ENCODE measurements at regions of chr6 and their contacts with region 1.

Region 1: GRCh38 chr6:31079656-31080261 is 32.6 kb downstream of the C6orf15 start:
- DNase-seq: no peak
- H3K4me3 ChIP-seq: peak overlapping the region in 3 of 4 donors; percentile 20 to 46 (median 23)
- H3K27ac ChIP-seq: no peak overlapping the region
- H3K4me1 ChIP-seq: peaks cover 3 to 9% (median 6%) of the 10 kb centered on the region in 4 donors
- H3K27me3 ChIP-seq: peaks cover 0 to 6% (median 0%) of the 10 kb centered on the region in 4 donors
- CTCF ChIP-seq: peak; percentile 68 to 91 (median 70)
- EP300 ChIP-seq: no peak
- POLR2A ChIP-seq: no peak

Region 2: DNA sequence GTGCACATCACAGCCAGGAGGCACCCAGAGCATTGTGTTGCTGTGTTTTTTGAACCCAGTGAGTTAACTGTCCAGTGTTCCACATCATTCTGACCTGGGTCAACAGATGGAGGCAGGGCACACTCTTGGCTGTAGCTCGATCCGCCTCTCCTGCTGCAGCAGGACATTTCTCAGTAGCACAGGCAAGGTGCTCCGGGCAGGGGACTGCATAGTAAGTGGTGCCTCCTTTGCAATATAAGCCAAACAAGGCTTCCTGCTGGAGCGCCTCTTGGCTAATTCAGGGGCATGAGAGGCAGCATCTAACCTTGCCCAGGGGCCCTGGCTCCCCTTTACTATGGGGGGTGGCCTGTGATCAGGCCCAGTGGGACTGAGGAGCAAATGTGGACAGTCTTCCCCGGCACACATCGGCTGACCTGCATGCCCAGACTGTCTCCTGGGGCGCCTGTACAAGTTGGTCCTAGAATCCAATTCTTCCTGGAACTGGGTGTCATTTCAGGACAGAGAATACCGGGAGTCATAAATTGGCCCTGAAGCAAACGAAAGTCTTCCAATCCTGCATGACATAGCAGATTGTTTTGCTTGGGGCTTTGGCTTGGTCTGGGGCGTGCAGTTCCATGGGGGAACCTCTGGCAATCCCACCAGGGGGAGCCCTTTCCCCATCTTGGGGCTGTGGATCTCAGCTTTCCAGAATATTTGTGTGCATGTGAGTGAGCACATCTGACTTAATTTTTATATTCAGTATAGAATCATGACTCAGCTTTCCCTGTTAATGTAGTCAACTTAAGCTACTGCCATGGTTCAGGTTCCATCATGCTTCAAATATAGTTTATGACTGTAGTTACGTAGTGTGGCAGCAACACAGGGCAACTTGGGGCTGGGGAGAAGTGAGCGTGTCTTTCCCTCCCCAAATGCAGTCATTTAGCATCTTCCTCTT is 251.5 kb before region 1 on chr6:
- intact Hi-C with region 1: loop called (anchors 5 kb)
- DNase-seq: peak; percentile 97
- H3K4me3 ChIP-seq: peak overlapping the region in 2 of 4 donors; percentile 12 to 16
- H3K27ac ChIP-seq: peak overlapping the region; percentile 54 to 85 (median 74)
- H3K4me1 ChIP-seq: peaks cover 12 to 33% (median 25%) of the 10 kb centered on the region in 4 donors
- H3K27me3 ChIP-seq: no peaks in the 10 kb centered on the region
- CTCF ChIP-seq: peak; percentile 92 to 97 (median 95)
- EP300 ChIP-seq: peak; percentile 75
- POLR2A ChIP-seq: no peak

Region 3: DNA sequence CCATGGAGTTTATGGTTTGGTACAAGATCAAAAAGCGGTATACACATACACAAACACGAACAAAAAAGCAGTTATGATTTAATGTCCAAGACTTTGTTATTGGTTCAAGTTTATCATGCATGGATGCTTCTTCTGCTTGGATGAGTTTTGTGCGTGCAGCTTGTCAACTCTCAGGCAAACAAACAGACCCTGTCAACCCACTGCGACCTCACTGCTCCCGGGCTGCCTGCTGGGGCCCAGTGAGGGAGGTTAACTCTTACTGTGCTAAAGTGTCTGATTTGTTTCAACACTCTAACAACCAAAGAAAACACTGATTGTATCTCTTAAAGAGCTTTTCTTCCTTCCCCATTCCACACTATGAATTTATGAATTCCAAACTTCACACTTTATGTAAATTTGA is 222.2 kb before region 1 on chr6:
- intact Hi-C with region 1: no loop called
- DNase-seq: no peak
- H3K4me3 ChIP-seq: no peak overlapping the region
- H3K27ac ChIP-seq: no peak overlapping the region
- H3K4me1 ChIP-seq: no peaks in the 10 kb centered on the region
- H3K27me3 ChIP-seq: no peaks in the 10 kb centered on the region
- CTCF ChIP-seq: no peak
- EP300 ChIP-seq: no peak
- POLR2A ChIP-seq: no peak

Region 4: DNA sequence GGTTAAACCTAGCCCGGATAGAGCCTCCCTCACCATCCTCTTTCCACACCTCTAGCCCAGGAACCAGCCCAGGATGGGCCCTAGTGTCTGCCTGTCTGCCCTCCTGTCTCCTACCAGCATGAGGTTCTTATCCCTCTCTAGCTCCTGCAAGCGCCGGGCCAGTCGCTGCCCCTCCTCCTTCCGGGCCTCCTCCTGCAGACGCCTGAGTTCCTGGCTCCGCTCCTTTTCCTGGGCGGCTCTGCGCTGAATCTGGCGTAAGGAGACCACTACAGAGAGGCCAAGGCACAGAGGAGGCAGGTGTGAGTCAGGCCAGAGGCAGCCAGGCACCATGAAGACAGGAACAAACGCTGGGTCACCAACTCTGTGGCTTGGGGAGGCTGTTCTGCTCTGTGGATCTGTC is 63.4 kb after region 1 on chr6:
- intact Hi-C with region 1: no loop called
- DNase-seq: no peak
- H3K4me3 ChIP-seq: no peak overlapping the region
- H3K27ac ChIP-seq: peak overlapping the region in 2 of 4 donors; percentile 30 to 48
- H3K4me1 ChIP-seq: peaks cover 6 to 24% (median 21%) of the 10 kb centered on the region in 4 donors
- H3K27me3 ChIP-seq: peaks cover 0 to 4% (median 0%) of the 10 kb centered on the region in 4 donors
- CTCF ChIP-seq: no peak
- EP300 ChIP-seq: no peak
- POLR2A ChIP-seq: no peak

Region 5: DNA sequence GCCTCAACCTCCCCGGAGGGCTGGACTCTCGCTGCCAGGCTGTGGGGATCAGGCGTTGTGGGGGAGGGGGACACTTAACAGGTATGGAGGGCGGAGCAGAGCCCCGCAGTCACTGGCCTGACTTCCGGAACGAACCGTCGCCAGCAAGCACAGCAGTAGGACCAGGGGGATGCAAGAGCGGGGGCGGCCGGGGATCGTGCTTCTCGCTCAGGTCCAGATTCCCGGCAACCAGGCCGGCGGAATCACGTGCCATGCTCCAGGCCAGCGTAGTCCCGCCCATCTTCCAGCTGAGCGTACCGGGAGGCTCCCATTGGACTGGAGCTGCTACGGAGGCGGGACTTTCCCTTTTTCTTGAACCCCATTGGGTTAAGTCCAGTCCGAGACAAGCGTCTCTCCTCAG is 100.7 kb after region 1 on chr6:
- intact Hi-C with region 1: no loop called
- DNase-seq: no peak
- H3K4me3 ChIP-seq: peak overlapping the region; percentile 26 to 52 (median 48)
- H3K27ac ChIP-seq: peak overlapping the region in 2 of 4 donors; percentile 46 to 58
- H3K4me1 ChIP-seq: peaks cover 0 to 19% (median 6%) of the 10 kb centered on the region in 4 donors
- H3K27me3 ChIP-seq: no peaks in the 10 kb centered on the region
- CTCF ChIP-seq: no peak
- EP300 ChIP-seq: no peak
- POLR2A ChIP-seq: no peak

Measured in esophagus muscularis mucosa (tissue), 4 donors.